ENCODE measurements at regions of chr10 and their contacts with region 1.

Region 1: DNA sequence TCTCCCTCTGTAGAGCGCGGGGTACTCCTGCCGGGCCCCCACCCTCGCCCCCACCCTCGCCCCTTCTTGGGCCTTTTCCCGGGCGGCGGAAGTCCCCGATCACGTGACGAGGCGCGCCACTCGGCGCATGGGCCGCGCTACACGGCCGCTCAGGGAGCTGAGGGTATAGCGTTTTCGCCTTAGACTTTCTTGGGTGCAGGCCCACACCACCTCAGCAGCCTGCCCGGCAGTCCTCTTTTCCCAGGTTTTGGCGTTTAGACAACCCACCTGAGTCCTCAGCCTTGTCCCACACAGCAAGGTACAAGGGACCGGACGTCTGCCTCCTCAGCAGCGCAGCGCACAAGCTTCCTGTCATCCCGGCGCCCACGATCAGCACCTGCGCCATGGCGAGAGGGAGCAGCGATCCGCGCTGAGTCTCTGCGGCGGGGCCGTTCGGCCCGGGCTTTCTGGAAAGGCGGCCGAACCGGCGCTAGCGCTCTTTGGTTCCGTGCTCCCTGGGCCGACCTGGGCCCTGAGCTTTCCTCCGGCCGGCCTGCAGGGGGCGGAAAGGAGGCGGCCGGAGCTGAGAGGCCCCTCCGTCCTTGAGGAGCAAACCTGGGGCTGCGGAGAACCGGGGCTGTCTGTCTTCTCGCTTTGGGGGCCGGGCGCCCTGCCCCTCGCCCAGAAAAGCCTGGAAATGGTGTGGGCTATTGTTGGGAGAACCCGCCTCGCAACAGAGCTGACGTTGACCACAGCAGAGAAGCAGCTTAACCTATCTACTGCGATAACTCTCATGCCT is at the start of gene RNLS:
- DNase-seq: peak; percentile 80
- H3K4me3 Mint-ChIP-seq: peak within 1 kb of the TSS; percentile 81
- H3K27ac Mint-ChIP-seq: peak within 1 kb of the TSS; percentile 86
- H3K4me1 Mint-ChIP-seq: peaks cover 11% of the 10 kb centered on the region
- H3K27me3 Mint-ChIP-seq: peaks cover 4% of the 10 kb centered on the region
- total RNA-seq, gene RNLS: 4.0 to 4.7 TPM

Region 2: DNA sequence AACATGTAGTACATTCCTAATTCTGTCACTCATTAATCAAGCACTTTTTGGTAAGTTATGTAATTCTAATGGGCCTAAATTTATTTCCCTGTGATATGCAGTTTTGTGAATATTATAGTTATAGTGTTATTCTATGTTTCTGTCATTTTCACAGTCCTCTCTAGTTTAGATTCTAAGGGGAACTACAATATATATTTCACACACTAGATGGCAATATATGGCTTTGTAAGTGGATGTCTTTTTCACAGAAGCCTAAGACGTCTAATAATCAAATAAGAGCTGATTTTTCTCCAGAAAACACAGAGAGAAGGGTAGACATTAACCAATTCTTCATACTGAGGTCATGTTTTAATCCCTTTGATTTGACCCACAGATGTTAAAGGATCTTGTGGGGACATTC is 17.9 kb before region 1 on chr10:
- CTCF ChIA-PET with region 1: interaction called, 11 read pairs
- POLR2A ChIA-PET with region 1: no interaction called
- intact Hi-C with region 1: no loop called
- DNase-seq: no peak
- H3K4me3 Mint-ChIP-seq: no peak overlapping the region
- H3K27ac Mint-ChIP-seq: no peak overlapping the region
- H3K4me1 Mint-ChIP-seq: peaks cover 5% of the 10 kb centered on the region
- H3K27me3 Mint-ChIP-seq: no peaks in the 10 kb centered on the region

Region 3: GRCh38 chr10:88670497-88670896 is 87.5 kb after region 1 on chr10:
- CTCF ChIA-PET with region 1: interaction called, 8 read pairs
- POLR2A ChIA-PET with region 1: no interaction called
- intact Hi-C with region 1: loop called (anchors 1 kb)
- DNase-seq: peak; percentile 33
- H3K4me3 Mint-ChIP-seq: no peak overlapping the region
- H3K27ac Mint-ChIP-seq: peak overlapping the region; percentile 21
- H3K4me1 Mint-ChIP-seq: peaks cover 18% of the 10 kb centered on the region
- H3K27me3 Mint-ChIP-seq: peaks cover 7% of the 10 kb centered on the region

Region 4: GRCh38 chr10:88828310-88828709 is 245.3 kb after region 1 on chr10:
- CTCF ChIA-PET with region 1: interaction called, 5 read pairs
- POLR2A ChIA-PET with region 1: no interaction called
- intact Hi-C with region 1: loop called (anchors 5 kb)
- DNase-seq: no peak
- H3K4me3 Mint-ChIP-seq: no peak overlapping the region
- H3K27ac Mint-ChIP-seq: no peak overlapping the region
- H3K4me1 Mint-ChIP-seq: peaks cover 60% of the 10 kb centered on the region
- H3K27me3 Mint-ChIP-seq: no peaks in the 10 kb centered on the region

Region 5: DNA sequence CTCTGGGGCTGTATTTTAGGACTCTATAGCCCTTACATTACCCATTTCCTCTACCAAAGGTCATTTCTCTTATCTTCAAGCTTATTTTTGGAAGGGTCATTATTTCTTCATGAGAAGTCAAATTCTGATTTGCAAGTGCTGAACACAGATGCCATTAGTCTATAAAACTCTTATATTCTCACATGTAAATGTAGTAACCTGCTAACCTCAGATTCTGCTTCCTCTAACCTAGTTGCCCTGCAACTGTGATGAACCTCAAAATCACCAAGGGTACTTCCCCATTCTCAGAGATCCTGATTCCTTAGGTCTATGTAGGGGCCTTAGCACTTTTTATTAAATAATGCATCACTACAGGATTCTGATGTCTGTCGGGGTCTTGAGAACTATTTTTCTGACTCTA is 413.9 kb after region 1 on chr10:
- CTCF ChIA-PET with region 1: interaction called, 3 read pairs
- POLR2A ChIA-PET with region 1: no interaction called
- intact Hi-C with region 1: loop called (anchors 5 kb)
- DNase-seq: no peak
- H3K4me3 Mint-ChIP-seq: no peak overlapping the region
- H3K27ac Mint-ChIP-seq: peak overlapping the region; percentile 32
- H3K4me1 Mint-ChIP-seq: peaks cover 83% of the 10 kb centered on the region
- H3K27me3 Mint-ChIP-seq: no peaks in the 10 kb centered on the region

Region 6: DNA sequence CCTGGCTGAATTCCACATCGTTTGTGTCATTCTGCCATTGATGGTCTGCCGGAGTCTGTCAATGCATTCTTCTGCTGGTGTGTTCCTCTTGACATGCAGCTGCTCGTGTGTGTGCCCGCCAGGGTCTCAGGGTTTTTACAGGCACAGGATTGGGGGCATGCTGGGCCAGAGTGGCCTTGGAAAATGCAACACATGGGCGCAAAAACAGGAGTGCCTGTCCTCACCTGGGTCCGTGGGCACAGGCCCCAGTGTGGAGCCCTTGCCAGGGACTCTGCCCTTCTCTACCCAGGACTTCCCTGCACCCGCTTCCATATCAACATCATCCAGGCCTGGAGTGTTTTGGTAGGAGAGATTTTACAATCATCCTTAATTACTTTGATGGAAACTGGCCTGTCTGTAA is 1459.1 kb after region 1 on chr10:
- CTCF ChIA-PET with region 1: no interaction called
- POLR2A ChIA-PET with region 1: no interaction called
- intact Hi-C with region 1: no loop called
- DNase-seq: no peak
- H3K4me3 Mint-ChIP-seq: no peak overlapping the region
- H3K27ac Mint-ChIP-seq: no peak overlapping the region
- H3K4me1 Mint-ChIP-seq: no peaks in the 10 kb centered on the region
- H3K27me3 Mint-ChIP-seq: peaks cover 1% of the 10 kb centered on the region